ENCODE measurements at regions of chr14 and their contacts with region 1.

Region 1: GRCh38 chr14:50311975-50312733 is at the starts of genes DMAC2L and L2HGDH:
- DNase-seq: peak; percentile 86 to 91 (median 89)
- H3K4me3 ChIP-seq: peak within 1 kb of the TSS; percentile 77 to 92
- H3K4me3 Mint-ChIP-seq: peak within 1 kb of the TSS; percentile 91 to 98 (median 97)
- H3K27ac ChIP-seq: peak within 1 kb of the TSS; percentile 76
- H3K27ac Mint-ChIP-seq: peak within 1 kb of the TSS; percentile 92 to 99 (median 99)
- H3K4me1 ChIP-seq: peaks cover 30% of the 10 kb centered on the region
- H3K4me1 Mint-ChIP-seq: peaks cover 30 to 47% (median 34%) of the 10 kb centered on the region in 4 donors
- H3K27me3 ChIP-seq: no peaks in the 10 kb centered on the region
- H3K27me3 Mint-ChIP-seq: no peaks in the 10 kb centered on the region
- total RNA-seq, gene DMAC2L: 15.9 to 19.5 TPM
- total RNA-seq, gene L2HGDH: 4.9 to 5.5 TPM

Region 2: DNA sequence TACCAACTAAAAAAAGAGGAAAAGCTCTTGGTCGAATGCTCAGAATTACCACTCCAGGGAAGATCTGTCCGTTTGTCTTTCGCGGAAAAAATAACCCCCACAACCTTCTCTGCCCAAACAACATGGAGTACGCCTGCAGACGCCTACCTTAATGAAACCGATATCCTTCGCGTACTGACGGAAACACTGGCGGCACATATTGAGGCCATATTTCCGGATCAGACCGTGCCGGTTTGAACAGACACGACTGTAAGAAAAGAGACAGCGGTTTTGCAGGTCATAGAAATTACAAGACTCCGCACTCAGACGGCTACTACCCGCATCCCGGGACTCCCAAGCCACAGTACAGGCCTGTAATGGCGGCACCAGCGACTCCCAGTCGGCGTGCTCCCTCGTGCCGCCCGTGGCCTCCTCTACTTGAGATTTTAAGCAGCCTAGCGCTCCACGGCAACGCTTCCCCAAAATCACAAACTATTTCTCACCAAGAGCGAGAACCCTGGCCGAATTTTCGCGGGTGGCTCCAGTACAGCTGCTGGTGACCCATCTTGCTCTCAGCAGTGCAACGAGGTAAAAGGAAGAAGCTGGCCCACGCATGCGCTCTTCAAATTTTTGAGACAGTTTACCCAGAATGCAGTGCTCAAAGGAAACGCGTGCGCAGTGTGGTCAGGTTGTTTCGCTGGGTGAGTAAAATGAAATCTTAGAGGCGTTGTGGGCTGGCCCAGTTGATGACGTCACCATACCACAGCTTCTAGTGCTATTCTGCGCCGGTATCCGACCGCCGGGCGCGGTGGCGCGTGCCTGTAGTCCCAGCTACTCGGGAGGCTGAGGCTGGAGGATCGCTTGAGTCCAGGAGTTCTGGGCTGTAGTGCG is 726.1 kb before region 1 on chr14 and contains the start of gene RPS29:
- CTCF ChIA-PET with region 1: interaction called, 6 read pairs
- POLR2A ChIA-PET with region 1: no interaction called
- intact Hi-C with region 1: loop called (anchors 2 kb)
- DNase-seq: peak; percentile 98 to 99 (median 99)
- H3K4me3 ChIP-seq: peak within 1 kb of the TSS; percentile 93 to 98
- H3K4me3 Mint-ChIP-seq: peak within 1 kb of the TSS; percentile 87 to 98 (median 95)
- H3K27ac ChIP-seq: peak within 1 kb of the TSS; percentile 95
- H3K27ac Mint-ChIP-seq: peak within 1 kb of the TSS; percentile 88 to 100 (median 99)
- H3K4me1 ChIP-seq: peaks cover 38% of the 10 kb centered on the region
- H3K4me1 Mint-ChIP-seq: peaks cover 29 to 62% (median 42%) of the 10 kb centered on the region in 4 donors
- H3K27me3 ChIP-seq: no peaks in the 10 kb centered on the region
- H3K27me3 Mint-ChIP-seq: peaks cover 0 to 4% of the 10 kb centered on the region in 2 donors
- total RNA-seq, gene RPS29: 3,602 to 3,749 TPM

Region 3: DNA sequence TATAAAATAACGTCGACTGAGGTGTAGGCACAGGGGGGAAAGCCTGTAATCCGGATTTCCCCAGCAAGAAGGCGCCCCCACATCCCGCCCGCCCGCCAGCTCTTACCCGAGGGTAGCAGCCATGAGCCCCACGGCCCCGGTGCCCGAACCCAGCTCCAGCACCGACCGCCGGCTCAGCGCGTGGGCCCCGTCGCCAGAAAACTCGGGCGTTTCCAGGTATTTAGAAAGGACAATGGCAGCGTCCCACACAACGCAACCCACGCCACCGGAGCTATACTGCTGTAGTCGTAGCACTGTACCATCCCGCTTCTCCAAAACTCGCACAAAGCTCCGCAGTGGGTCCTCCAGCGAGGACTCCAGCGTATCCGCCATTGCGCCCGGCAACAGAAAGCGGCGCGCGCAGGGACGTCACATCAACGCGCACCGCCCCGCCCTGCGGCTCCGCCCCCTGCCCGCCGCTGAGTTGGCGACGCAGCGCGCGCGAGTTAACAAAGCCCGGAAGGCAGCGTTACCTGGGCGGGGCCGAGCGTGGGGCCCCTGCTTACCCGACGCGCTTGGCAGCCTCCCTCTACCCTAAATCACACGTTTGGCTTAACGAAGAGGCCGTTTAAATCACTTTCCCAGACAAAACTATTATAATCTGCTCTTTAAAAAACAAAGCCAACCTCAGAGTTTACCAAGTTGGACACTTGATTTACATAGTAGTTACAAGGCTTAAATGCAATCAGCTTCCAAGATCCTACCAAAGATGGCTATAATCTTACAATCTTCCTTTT is 195.8 kb before region 1 on chr14 and contains the start of gene VCPKMT:
- CTCF ChIA-PET with region 1: interaction called, 4 read pairs
- POLR2A ChIA-PET with region 1: interaction called, 9 read pairs
- intact Hi-C with region 1: loop called (anchors 2 kb)
- DNase-seq: peak; percentile 93 to 96 (median 95)
- H3K4me3 ChIP-seq: peak within 1 kb of the TSS; percentile 65 to 69
- H3K4me3 Mint-ChIP-seq: peak within 1 kb of the TSS; percentile 97 to 98 (median 98)
- H3K27ac ChIP-seq: peak within 1 kb of the TSS; percentile 93
- H3K27ac Mint-ChIP-seq: peak within 1 kb of the TSS; percentile 96 to 100 (median 99)
- H3K4me1 ChIP-seq: peaks cover 34% of the 10 kb centered on the region
- H3K4me1 Mint-ChIP-seq: peaks cover 10 to 32% (median 23%) of the 10 kb centered on the region in 4 donors
- H3K27me3 ChIP-seq: no peaks in the 10 kb centered on the region
- H3K27me3 Mint-ChIP-seq: no peaks in the 10 kb centered on the region
- total RNA-seq, gene VCPKMT: 17.3 to 20.1 TPM

Region 4: GRCh38 chr14:50231475-50232275 is 80.5 kb before region 1 on chr14 and contains the start of gene SOS2:
- CTCF ChIA-PET with region 1: interaction called, 3 read pairs
- POLR2A ChIA-PET with region 1: interaction called, 15 read pairs
- intact Hi-C with region 1: loop called (anchors 2 kb)
- DNase-seq: peak; percentile 83 to 89 (median 83)
- H3K4me3 ChIP-seq: peak within 1 kb of the TSS; percentile 50 to 81
- H3K4me3 Mint-ChIP-seq: peak within 1 kb of the TSS; percentile 86 to 97 (median 90)
- H3K27ac ChIP-seq: peak within 1 kb of the TSS; percentile 81
- H3K27ac Mint-ChIP-seq: peak within 1 kb of the TSS; percentile 90 to 98 (median 95)
- H3K4me1 ChIP-seq: peaks cover 48% of the 10 kb centered on the region
- H3K4me1 Mint-ChIP-seq: peaks cover 27 to 56% (median 38%) of the 10 kb centered on the region in 4 donors
- H3K27me3 ChIP-seq: no peaks in the 10 kb centered on the region
- H3K27me3 Mint-ChIP-seq: no peaks in the 10 kb centered on the region
- total RNA-seq, gene SOS2: 42.1 to 43.4 TPM

Region 5: GRCh38 chr14:50363714-50364111 is 51.6 kb after region 1 on chr14:
- CTCF ChIA-PET with region 1: interaction called, 3 read pairs
- POLR2A ChIA-PET with region 1: interaction called, 18 read pairs
- intact Hi-C with region 1: loop called (anchors 2 kb)
- DNase-seq: peak; percentile 61 to 77 (median 73)
- H3K4me3 ChIP-seq: peak overlapping the region; percentile 64 to 79
- H3K4me3 Mint-ChIP-seq: peak overlapping the region; percentile 84 to 97 (median 90)
- H3K27ac ChIP-seq: peak overlapping the region; percentile 73
- H3K27ac Mint-ChIP-seq: peak overlapping the region; percentile 83 to 97 (median 93)
- H3K4me1 ChIP-seq: peaks cover 17% of the 10 kb centered on the region
- H3K4me1 Mint-ChIP-seq: peaks cover 28 to 33% (median 30%) of the 10 kb centered on the region in 4 donors
- H3K27me3 ChIP-seq: no peaks in the 10 kb centered on the region
- H3K27me3 Mint-ChIP-seq: no peaks in the 10 kb centered on the region

Region 6: GRCh38 chr14:50532502-50533240 is 220.5 kb after region 1 on chr14 and contains the start of gene MAP4K5:
- CTCF ChIA-PET with region 1: interaction called, 7 read pairs
- POLR2A ChIA-PET with region 1: interaction called, 13 read pairs
- intact Hi-C with region 1: loop called (anchors 2 kb)
- DNase-seq: peak; percentile 85 to 89 (median 88)
- H3K4me3 ChIP-seq: peak within 1 kb of the TSS; percentile 26 to 68
- H3K4me3 Mint-ChIP-seq: peak within 1 kb of the TSS; percentile 88 to 94 (median 93)
- H3K27ac ChIP-seq: peak within 1 kb of the TSS; percentile 69
- H3K27ac Mint-ChIP-seq: peak within 1 kb of the TSS; percentile 85 to 95 (median 91)
- H3K4me1 ChIP-seq: peaks cover 46% of the 10 kb centered on the region
- H3K4me1 Mint-ChIP-seq: peaks cover 33 to 50% (median 43%) of the 10 kb centered on the region in 4 donors
- H3K27me3 ChIP-seq: no peaks in the 10 kb centered on the region
- H3K27me3 Mint-ChIP-seq: no peaks in the 10 kb centered on the region
- total RNA-seq, gene MAP4K5: 42.6 to 43.0 TPM